Calu3 (cell line): ENCODE measurements at regions of chr4 and their contacts with region 1.

Region 1: DNA sequence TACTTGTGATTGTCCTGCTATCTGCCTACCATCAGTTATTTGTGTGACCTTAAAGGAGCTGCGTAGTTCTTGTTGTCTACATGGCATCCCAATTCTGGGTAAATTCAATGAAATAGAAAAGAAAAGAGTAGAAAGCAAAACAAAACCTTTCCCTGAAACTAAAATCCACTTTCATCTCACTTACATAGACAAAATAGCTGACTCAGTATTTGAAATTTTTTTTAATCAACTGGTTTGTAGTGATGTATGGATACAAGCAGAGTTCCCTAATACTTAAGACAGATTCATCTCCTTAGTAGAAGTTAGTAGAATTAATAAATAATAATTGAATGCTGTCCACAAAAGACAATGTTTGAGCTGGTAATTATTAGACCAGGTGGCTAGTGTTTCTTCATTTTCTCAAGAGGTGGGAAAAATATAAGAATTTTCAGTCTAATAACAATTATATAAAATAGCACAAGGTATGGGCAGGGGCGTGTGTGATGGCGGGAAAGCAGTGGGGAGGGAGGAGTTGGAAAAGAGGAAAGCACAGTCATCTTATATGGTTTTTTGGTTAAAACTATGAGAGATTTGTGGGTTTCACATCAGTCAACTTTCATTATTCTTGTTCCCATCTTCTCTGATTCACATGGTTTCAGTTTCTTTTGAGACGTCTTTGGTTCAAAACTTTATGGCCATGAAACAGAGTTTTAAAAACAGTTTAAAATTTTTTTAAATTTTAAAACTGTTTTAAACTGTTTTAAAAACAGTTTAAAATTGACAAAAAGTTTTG is 275.2 kb downstream of the SPRY1 start:
- DNase-seq: no peak
- H3K4me3 Mint-ChIP-seq: no peak overlapping the region
- H3K27ac Mint-ChIP-seq: no peak overlapping the region
- H3K4me1 Mint-ChIP-seq: peaks cover 19% of the 10 kb centered on the region
- H3K27me3 Mint-ChIP-seq: no peaks in the 10 kb centered on the region
- CTCF ChIP-seq: no peak

Region 2: GRCh38 chr4:124118084-124118460 is 446.3 kb after region 1 on chr4:
- CTCF ChIA-PET with region 1: no interaction called
- intact Hi-C with region 1: loop called (anchors 5 kb)
- DNase-seq: no peak
- H3K4me3 Mint-ChIP-seq: no peak overlapping the region
- H3K27ac Mint-ChIP-seq: no peak overlapping the region
- H3K4me1 Mint-ChIP-seq: peaks cover 12% of the 10 kb centered on the region
- H3K27me3 Mint-ChIP-seq: no peaks in the 10 kb centered on the region
- CTCF ChIP-seq: no peak